CD4-positive, alpha-beta memory T cell (primary cell): ENCODE measurements at regions of chr11 and their contacts with region 1.

Region 1: DNA sequence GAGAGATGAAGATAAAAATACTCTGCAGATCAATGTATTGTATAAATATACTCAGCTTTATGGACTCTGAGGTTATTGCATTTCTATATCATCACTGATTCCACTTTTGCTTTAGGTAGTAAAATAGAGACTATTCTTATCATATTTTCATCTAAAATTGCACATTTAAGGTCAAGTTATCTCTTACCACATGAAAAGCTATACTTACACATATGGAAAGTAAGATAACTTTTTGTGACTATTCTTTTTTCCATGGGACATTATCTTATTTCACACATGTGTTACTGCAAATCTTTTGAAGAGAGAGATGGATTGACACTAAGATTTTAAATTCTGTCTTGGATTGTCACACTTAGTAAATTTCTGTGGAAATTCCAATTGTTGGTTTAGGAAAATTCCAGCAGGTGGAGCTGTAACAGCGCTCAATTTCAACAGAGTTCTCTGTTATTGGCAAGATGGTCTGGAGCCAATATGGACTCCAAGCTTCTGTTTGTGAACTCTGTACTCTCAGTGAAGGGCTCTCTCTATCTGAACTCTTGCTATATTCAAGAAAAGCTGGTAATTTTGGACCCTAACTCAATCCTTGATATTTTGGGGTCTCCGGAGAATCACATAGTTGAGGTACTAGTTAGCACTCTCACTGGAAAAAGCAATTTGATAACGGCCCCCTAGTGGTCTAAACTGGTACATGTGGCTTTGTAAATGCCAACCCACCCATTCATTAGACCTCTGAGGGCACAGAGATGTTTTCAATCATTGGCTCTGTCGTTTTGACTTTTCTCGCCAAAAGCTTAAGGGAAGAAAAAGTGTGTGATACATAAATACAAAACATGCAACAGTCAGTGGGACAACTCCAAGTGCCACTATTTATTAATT is 429.7 kb downstream of the ETS1 start:
- DNase-seq: peak; percentile 60 to 80 (median 76)
- H3K4me3 ChIP-seq: peak overlapping the region; percentile 13 to 27
- H3K4me3 Mint-ChIP-seq: peak overlapping the region; percentile 77 to 91 (median 85)
- H3K27ac ChIP-seq: no peak overlapping the region
- H3K27ac Mint-ChIP-seq: peak overlapping the region in 5 of 7 donors; percentile 54 to 73 (median 61)
- H3K4me1 ChIP-seq: no peaks in the 10 kb centered on the region
- H3K4me1 Mint-ChIP-seq: peaks cover 0 to 8% (median 5%) of the 10 kb centered on the region in 4 donors
- H3K27me3 ChIP-seq: no peaks in the 10 kb centered on the region
- H3K27me3 Mint-ChIP-seq: no peaks in the 10 kb centered on the region

Region 2: GRCh38 chr11:128021349-128022006 is 136.2 kb before region 1 on chr11:
- CTCF ChIA-PET with region 1: interaction called, 89 read pairs
- POLR2A ChIA-PET with region 1: interaction called, 3 read pairs
- intact Hi-C with region 1: no loop called
- DNase-seq: peak in 1 of 5 donors; percentile 31
- H3K4me3 ChIP-seq: no peak overlapping the region
- H3K4me3 Mint-ChIP-seq: no peak overlapping the region
- H3K27ac ChIP-seq: no peak overlapping the region
- H3K27ac Mint-ChIP-seq: no peak overlapping the region
- H3K4me1 ChIP-seq: no peaks in the 10 kb centered on the region
- H3K4me1 Mint-ChIP-seq: no peaks in the 10 kb centered on the region
- H3K27me3 ChIP-seq: no peaks in the 10 kb centered on the region
- H3K27me3 Mint-ChIP-seq: peaks cover 1 to 2% of the 10 kb centered on the region in 2 donors

Region 3: DNA sequence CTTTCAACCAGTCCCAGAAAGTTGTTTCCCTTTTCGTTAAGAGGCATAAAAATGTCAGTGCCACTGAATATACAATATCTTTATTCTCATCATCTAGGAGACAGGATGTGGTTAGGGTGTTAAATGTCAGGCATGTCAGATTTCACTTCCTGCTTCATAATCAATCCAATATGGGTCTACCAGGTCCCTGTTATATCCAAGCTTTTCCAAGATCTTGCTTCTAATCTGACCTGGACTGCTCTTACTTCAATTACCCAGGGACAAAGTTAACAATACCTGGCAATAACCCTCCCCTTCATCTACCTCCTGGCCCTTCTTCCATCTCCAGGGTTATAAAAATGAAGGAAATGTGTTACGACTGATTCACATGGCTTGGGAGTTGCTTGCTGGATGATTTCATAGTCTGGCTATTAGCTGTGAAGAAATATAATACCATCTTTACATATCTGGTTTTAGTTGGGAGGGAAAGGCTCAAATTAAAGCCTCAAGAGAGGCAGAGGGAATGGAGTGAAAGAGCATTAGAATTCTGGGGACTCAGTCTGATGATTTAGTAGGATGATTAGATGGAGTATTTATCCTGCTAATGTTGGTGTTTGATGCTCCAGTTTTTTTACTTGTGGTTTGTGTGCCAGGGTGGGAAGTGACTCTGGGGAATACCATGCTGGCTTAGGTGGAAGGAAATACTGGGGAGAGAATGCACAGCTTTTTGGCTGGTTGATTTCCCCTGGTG is 104.6 kb before region 1 on chr11:
- CTCF ChIA-PET with region 1: interaction called, 66 read pairs
- POLR2A ChIA-PET with region 1: interaction called, 6 read pairs
- intact Hi-C with region 1: no loop called
- DNase-seq: peak in 4 of 5 donors; percentile 37 to 48 (median 46)
- H3K4me3 ChIP-seq: peak overlapping the region in 1 of 2 donors; percentile 44
- H3K4me3 Mint-ChIP-seq: peak overlapping the region; percentile 53 to 83 (median 78)
- H3K27ac ChIP-seq: peak overlapping the region; percentile 52
- H3K27ac Mint-ChIP-seq: peak overlapping the region; percentile 71 to 95 (median 85)
- H3K4me1 ChIP-seq: peaks cover 69% of the 10 kb centered on the region
- H3K4me1 Mint-ChIP-seq: peaks cover 49 to 78% (median 65%) of the 10 kb centered on the region in 4 donors
- H3K27me3 ChIP-seq: no peaks in the 10 kb centered on the region
- H3K27me3 Mint-ChIP-seq: no peaks in the 10 kb centered on the region

Region 4: GRCh38 chr11:128095466-128095981 is 62.1 kb before region 1 on chr11:
- CTCF ChIA-PET with region 1: interaction called, 10 read pairs
- POLR2A ChIA-PET with region 1: no interaction called
- intact Hi-C with region 1: no loop called
- DNase-seq: no peak
- H3K4me3 ChIP-seq: no peak overlapping the region
- H3K4me3 Mint-ChIP-seq: no peak overlapping the region
- H3K27ac ChIP-seq: no peak overlapping the region
- H3K27ac Mint-ChIP-seq: peak overlapping the region in 1 of 7 donors; percentile 20
- H3K4me1 ChIP-seq: no peaks in the 10 kb centered on the region
- H3K4me1 Mint-ChIP-seq: peaks cover 3 to 12% (median 8%) of the 10 kb centered on the region in 4 donors
- H3K27me3 ChIP-seq: no peaks in the 10 kb centered on the region
- H3K27me3 Mint-ChIP-seq: no peaks in the 10 kb centered on the region

Region 5: DNA sequence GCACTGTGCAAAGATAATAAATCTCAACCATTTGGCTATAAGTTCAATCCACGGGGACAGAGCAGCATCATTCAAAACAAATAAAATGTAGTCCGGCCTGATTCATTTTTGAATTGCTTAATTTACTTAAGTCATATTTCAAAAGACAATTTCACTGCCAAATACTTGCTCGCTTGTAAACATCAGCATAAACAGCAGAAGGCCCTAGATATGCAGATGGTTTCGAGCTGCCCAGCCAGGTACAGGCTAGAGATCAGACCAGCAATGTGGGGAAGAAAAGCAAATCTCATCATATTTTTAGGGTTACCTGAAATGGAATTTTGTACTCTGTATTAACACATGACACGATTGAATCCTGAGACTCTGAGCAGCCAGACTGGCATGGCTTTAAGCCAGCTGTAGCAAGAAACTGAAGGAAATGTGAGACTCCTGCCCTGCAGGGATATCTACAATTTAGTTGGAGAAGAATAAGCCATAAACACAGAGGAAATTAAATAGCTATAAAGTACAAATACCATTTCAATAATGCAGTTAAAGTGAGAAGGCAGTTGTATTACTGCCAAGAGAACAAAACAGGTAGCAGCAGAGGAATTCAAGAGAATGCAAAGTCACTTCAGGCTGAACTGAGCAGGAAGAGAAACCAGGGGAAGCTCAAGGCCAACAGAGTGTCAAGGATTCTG is 10.6 kb before region 1 on chr11:
- CTCF ChIA-PET with region 1: interaction called, 44 read pairs
- POLR2A ChIA-PET with region 1: no interaction called
- intact Hi-C with region 1: no loop called
- DNase-seq: no peak
- H3K4me3 ChIP-seq: no peak overlapping the region
- H3K4me3 Mint-ChIP-seq: no peak overlapping the region
- H3K27ac ChIP-seq: no peak overlapping the region
- H3K27ac Mint-ChIP-seq: peak overlapping the region in 2 of 7 donors; percentile 48 to 83
- H3K4me1 ChIP-seq: no peaks in the 10 kb centered on the region
- H3K4me1 Mint-ChIP-seq: peaks cover 4 to 11% (median 6%) of the 10 kb centered on the region in 4 donors
- H3K27me3 ChIP-seq: no peaks in the 10 kb centered on the region
- H3K27me3 Mint-ChIP-seq: no peaks in the 10 kb centered on the region

Region 6: DNA sequence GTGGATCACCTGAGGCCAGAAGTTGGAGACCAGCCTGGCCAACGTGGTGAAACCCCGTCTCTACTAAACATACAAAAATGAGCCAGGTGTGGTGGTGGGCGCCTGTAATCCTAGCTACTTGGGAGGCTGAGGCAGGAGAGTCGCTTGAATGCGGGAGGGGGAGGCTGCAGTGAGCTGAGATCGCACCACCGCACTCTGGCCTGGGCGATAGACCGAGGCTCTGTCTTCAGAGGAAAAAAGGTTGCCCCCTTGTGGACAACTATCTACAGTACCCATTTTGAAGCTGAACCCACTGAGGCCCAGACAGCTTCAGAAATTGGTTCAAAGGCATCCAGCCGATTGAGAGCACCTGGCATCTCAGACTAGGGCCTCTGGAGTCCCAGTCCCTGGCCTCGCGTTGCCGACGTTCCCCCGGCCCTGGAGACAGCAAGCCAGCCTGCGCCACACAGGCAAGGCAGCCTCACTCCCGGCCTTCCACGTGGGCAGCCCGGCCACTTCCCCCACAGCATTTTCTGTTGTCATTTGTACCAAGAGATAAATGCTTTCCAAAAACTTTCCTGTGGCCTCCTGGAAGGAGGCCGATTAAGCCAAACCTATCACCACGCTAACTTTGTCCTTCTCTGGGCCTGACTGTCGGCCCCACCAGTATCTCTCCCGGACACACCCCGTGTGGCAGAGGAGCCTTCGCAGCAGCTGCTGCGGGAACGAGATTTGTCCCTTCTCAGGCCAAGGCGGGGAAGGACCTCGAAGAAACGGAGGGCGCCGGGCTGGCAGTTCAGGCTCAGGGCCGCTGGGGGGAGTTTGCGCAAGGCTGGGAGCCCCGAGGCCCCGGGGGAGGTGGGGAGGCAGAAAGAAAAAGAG is 619.0 kb after region 1 on chr11:
- CTCF ChIA-PET with region 1: interaction called, 14 read pairs
- POLR2A ChIA-PET with region 1: no interaction called
- intact Hi-C with region 1: no loop called
- DNase-seq: peak; percentile 43 to 61 (median 56)
- H3K4me3 ChIP-seq: no peak overlapping the region
- H3K4me3 Mint-ChIP-seq: peak overlapping the region in 4 of 8 donors; percentile 21 to 63 (median 36)
- H3K27ac ChIP-seq: no peak overlapping the region
- H3K27ac Mint-ChIP-seq: peak overlapping the region; percentile 62 to 91 (median 81)
- H3K4me1 ChIP-seq: peaks cover 62% of the 10 kb centered on the region
- H3K4me1 Mint-ChIP-seq: peaks cover 56 to 93% (median 72%) of the 10 kb centered on the region in 4 donors
- H3K27me3 ChIP-seq: no peaks in the 10 kb centered on the region
- H3K27me3 Mint-ChIP-seq: no peaks in the 10 kb centered on the region

Region 7: DNA sequence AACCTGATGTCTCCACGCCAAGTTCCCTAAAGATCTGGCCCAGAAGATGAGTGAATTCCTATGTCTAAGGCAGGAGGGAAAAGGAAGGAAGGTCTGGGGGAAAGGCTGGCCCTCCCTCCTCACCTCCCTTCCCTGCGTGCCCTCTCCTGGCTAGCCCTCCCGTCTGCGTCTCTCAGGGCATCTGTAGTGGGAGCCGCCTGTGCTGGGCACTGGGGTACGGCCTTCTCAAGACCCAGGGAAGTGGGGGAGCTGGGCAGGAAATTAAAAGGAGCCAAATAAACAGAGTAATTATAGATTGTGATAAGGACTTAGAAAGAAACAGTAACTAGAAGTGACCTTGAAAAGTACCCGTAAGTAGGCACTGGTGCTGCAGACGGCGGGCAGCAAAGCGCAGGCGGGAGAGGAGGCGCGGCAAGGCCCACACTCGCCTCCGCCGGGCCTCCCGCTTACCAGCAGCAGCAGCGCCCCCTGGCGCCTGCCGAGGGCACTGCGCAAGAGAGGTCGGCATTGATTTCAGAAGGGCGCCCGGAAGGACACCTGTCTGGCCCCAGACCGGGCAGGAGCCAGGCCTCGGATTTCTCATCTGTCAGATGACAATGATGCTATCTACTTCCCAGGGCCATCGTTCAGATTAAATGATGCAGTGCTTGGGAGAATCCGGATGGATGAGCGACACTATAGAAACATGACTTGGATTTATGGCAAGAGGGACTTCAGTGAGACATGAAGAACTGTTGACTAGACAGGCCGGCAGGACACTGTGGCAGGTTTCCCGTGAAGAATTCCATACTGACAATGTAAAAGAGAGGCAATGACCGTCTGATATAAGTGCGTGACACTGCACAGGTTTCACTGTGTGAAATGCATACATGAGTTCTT is 702.1 kb after region 1 on chr11:
- CTCF ChIA-PET with region 1: interaction called, 32 read pairs
- POLR2A ChIA-PET with region 1: no interaction called
- intact Hi-C with region 1: loop called (anchors 1 kb)
- DNase-seq: peak; percentile 66 to 76 (median 73)
- H3K4me3 ChIP-seq: no peak overlapping the region
- H3K4me3 Mint-ChIP-seq: peak overlapping the region in 2 of 8 donors; percentile 14 to 32
- H3K27ac ChIP-seq: no peak overlapping the region
- H3K27ac Mint-ChIP-seq: peak overlapping the region in 2 of 7 donors; percentile 14 to 71
- H3K4me1 ChIP-seq: no peaks in the 10 kb centered on the region
- H3K4me1 Mint-ChIP-seq: peaks cover 4 to 11% (median 7%) of the 10 kb centered on the region in 4 donors
- H3K27me3 ChIP-seq: no peaks in the 10 kb centered on the region
- H3K27me3 Mint-ChIP-seq: peaks cover 0 to 2% of the 10 kb centered on the region in 2 donors